CD8-positive, alpha-beta T cell (primary cell): ENCODE measurements at regions of chr16 and their contacts with region 1.

Region 1: DNA sequence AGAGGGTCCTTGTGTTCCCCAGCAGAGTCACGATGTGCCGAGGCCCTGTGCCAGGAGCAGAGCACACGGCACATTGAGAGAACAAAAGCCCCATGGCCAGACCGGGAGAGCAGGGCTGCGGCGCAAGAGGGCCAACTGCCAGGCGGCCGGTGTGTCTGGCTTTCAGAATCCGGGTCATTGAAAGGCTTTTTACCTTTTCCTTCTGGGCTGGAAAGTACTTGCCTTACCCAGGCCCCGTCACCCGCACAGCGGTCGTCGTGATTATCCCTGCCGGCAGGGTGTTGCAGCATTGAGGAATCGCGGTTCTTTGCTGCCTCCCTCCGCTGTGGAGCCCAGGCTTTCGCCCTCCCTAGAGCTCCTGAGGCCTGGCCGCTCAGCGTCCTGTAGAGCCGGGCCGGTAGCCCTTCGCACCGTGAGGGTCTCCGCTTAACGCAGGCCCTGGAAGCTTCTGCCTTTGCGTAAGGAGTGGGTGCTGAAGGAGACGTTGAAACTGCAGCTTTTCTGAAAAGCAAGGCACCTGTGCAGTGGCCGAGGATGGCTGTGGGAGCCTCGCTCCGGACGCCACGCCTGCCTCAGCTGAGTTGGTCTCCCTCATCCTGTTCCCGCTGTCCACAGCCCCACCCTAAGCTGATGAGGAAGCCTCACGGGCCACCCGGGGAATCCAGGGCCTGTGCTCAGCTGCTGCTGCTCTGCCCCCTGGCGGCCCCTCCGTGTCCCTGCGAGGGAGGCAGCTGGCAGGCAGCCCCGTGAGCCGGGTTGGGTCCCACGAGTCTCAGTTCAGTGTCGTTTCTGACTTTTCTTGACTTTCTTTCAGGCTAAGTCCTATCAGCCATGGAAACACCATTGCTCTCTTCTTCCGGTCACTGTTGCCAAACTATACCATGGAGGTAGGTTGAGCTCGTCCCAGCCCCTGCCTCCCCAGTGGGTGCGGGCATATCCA is 8.6 kb upstream of the MC1R start:
- DNase-seq: peak; percentile 43 to 80 (median 72)
- ATAC-seq: peak; percentile 83
- H3K4me3 ChIP-seq: no peak overlapping the region
- H3K4me3 Mint-ChIP-seq: no peak overlapping the region
- H3K27ac ChIP-seq: no peak overlapping the region
- H3K27ac Mint-ChIP-seq: no peak overlapping the region
- H3K4me1 ChIP-seq: peaks cover 4% of the 10 kb centered on the region
- H3K4me1 Mint-ChIP-seq: peaks cover 5% of the 10 kb centered on the region
- H3K27me3 ChIP-seq: no peaks in the 10 kb centered on the region
- H3K27me3 Mint-ChIP-seq: no peaks in the 10 kb centered on the region
- CTCF ChIP-seq: peak; percentile 77

Region 2: GRCh38 chr16:89749647-89750046 is 160.4 kb before region 1 on chr16:
- CTCF ChIA-PET with region 1: no interaction called
- POLR2A ChIA-PET with region 1: no interaction called
- intact Hi-C with region 1: no loop called
- DNase-seq: no peak
- ATAC-seq: no peak
- H3K4me3 ChIP-seq: no peak overlapping the region
- H3K4me3 Mint-ChIP-seq: no peak overlapping the region
- H3K27ac ChIP-seq: no peak overlapping the region
- H3K27ac Mint-ChIP-seq: no peak overlapping the region
- H3K4me1 ChIP-seq: peaks cover 27% of the 10 kb centered on the region
- H3K4me1 Mint-ChIP-seq: peaks cover 15% of the 10 kb centered on the region
- H3K27me3 ChIP-seq: no peaks in the 10 kb centered on the region
- H3K27me3 Mint-ChIP-seq: no peaks in the 10 kb centered on the region
- CTCF ChIP-seq: no peak

Region 3: DNA sequence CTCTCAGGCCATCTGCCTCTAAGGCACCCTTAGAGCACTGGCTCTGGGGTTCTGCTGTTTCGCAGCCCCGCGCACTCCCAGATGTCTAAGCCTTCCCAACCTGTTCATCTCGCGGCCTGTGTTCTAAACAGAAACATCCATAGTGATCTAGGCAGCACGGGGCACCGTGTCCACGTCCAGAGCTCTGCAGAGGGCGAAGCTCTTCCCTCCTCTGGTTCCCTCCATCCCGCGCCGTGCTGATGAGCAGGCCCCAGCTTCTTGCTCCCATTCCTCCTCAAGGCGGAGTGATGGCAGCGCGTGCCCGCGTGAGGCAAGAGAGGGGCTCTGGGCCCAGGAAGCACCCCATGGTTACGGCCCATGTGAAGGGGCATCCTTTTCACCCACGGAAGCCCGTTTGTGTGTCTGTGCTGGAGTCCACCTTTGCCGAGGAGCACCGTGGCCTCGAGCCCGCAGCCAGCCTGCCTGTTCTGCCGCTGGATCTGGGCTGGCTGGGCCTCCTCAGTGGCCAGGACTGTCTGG is 78.2 kb before region 1 on chr16:
- CTCF ChIA-PET with region 1: no interaction called
- POLR2A ChIA-PET with region 1: no interaction called
- intact Hi-C with region 1: no loop called
- DNase-seq: no peak
- ATAC-seq: no peak
- H3K4me3 ChIP-seq: no peak overlapping the region
- H3K4me3 Mint-ChIP-seq: no peak overlapping the region
- H3K27ac ChIP-seq: no peak overlapping the region
- H3K27ac Mint-ChIP-seq: no peak overlapping the region
- H3K4me1 ChIP-seq: peaks cover 11% of the 10 kb centered on the region
- H3K4me1 Mint-ChIP-seq: peaks cover 8% of the 10 kb centered on the region
- H3K27me3 ChIP-seq: peaks cover 4 to 14% of the 10 kb centered on the region in 2 experiments
- H3K27me3 Mint-ChIP-seq: peaks cover 26% of the 10 kb centered on the region
- CTCF ChIP-seq: no peak

Region 4: GRCh38 chr16:89887243-89887642 is 22.8 kb before region 1 on chr16:
- CTCF ChIA-PET with region 1: interaction called, 12 read pairs
- POLR2A ChIA-PET with region 1: interaction called, 4 read pairs
- intact Hi-C with region 1: no loop called
- DNase-seq: no peak
- ATAC-seq: no peak
- H3K4me3 ChIP-seq: no peak overlapping the region
- H3K4me3 Mint-ChIP-seq: no peak overlapping the region
- H3K27ac ChIP-seq: no peak overlapping the region
- H3K27ac Mint-ChIP-seq: no peak overlapping the region
- H3K4me1 ChIP-seq: peaks cover 5% of the 10 kb centered on the region
- H3K4me1 Mint-ChIP-seq: peaks cover 22% of the 10 kb centered on the region
- H3K27me3 ChIP-seq: no peaks in the 10 kb centered on the region
- H3K27me3 Mint-ChIP-seq: no peaks in the 10 kb centered on the region
- CTCF ChIP-seq: no peak

Region 5: GRCh38 chr16:89893642-89894509 is 16.2 kb before region 1 on chr16:
- CTCF ChIA-PET with region 1: interaction called, 17 read pairs
- POLR2A ChIA-PET with region 1: no interaction called
- intact Hi-C with region 1: no loop called
- DNase-seq: no peak
- ATAC-seq: no peak
- H3K4me3 ChIP-seq: no peak overlapping the region
- H3K4me3 Mint-ChIP-seq: no peak overlapping the region
- H3K27ac ChIP-seq: no peak overlapping the region
- H3K27ac Mint-ChIP-seq: no peak overlapping the region
- H3K4me1 ChIP-seq: peaks cover 5% of the 10 kb centered on the region
- H3K4me1 Mint-ChIP-seq: peaks cover 13% of the 10 kb centered on the region
- H3K27me3 ChIP-seq: no peaks in the 10 kb centered on the region
- H3K27me3 Mint-ChIP-seq: no peaks in the 10 kb centered on the region
- CTCF ChIP-seq: no peak

Region 6: DNA sequence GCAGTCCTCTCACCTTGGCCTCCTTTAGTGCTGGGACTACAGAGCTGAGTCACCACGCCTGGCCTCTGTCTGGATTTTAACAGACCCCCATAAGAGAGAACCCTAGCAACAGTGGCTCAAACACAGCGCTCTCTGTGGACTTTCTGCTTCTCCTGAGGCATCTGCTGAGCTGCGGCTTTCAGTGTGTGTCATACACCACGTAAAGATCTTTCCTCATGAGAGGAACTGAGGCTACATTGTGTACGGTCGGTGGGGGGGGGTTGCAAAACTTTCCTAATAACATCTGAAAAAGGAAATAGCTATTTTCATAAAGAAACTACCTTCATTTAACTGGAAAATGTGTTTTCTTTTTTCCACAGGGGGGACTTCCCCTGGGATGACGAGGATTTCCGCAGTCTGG is 71.4 kb after region 1 on chr16:
- CTCF ChIA-PET with region 1: no interaction called
- POLR2A ChIA-PET with region 1: no interaction called
- intact Hi-C with region 1: no loop called
- DNase-seq: no peak
- ATAC-seq: no peak
- H3K4me3 ChIP-seq: no peak overlapping the region
- H3K4me3 Mint-ChIP-seq: no peak overlapping the region
- H3K27ac ChIP-seq: no peak overlapping the region
- H3K27ac Mint-ChIP-seq: no peak overlapping the region
- H3K4me1 ChIP-seq: no peaks in the 10 kb centered on the region
- H3K4me1 Mint-ChIP-seq: peaks cover 2% of the 10 kb centered on the region
- H3K27me3 ChIP-seq: no peaks in the 10 kb centered on the region
- H3K27me3 Mint-ChIP-seq: no peaks in the 10 kb centered on the region
- CTCF ChIP-seq: no peak